CD14-positive monocyte (primary cell): ENCODE measurements at regions of chr1 and their contacts with region 1.

Region 1: GRCh38 chr1:229674042-229674441 is 48.0 kb downstream of the URB2 start:
- DNase-seq: no peak
- H3K4me3 ChIP-seq: no peak overlapping the region
- H3K4me3 Mint-ChIP-seq: no peak overlapping the region
- H3K27ac ChIP-seq: no peak overlapping the region
- H3K27ac Mint-ChIP-seq: no peak overlapping the region
- H3K4me1 ChIP-seq: no peaks in the 10 kb centered on the region
- H3K4me1 Mint-ChIP-seq: no peaks in the 10 kb centered on the region
- H3K27me3 ChIP-seq: no peaks in the 10 kb centered on the region
- H3K27me3 Mint-ChIP-seq: peaks cover 2% of the 10 kb centered on the region in 3 donors
- CTCF ChIP-seq: no peak

Region 2: GRCh38 chr1:228664399-228664914 is 1009.6 kb before region 1 on chr1:
- intact Hi-C with region 1: no loop called
- DNase-seq: peak; percentile 59 to 78 (median 69)
- H3K4me3 ChIP-seq: no peak overlapping the region
- H3K4me3 Mint-ChIP-seq: no peak overlapping the region
- H3K27ac ChIP-seq: no peak overlapping the region
- H3K27ac Mint-ChIP-seq: no peak overlapping the region
- H3K4me1 ChIP-seq: peaks cover 3 to 8% of the 10 kb centered on the region in 2 donors
- H3K4me1 Mint-ChIP-seq: peaks cover 8% of the 10 kb centered on the region
- H3K27me3 ChIP-seq: peaks cover 0 to 2% of the 10 kb centered on the region in 2 donors
- H3K27me3 Mint-ChIP-seq: peaks cover 9 to 15% (median 11%) of the 10 kb centered on the region in 3 donors
- CTCF ChIP-seq: peak; percentile 88

Region 3: GRCh38 chr1:229685149-229685548 is 11.1 kb after region 1 on chr1:
- intact Hi-C with region 1: loop called in 1 of 2 experiments (anchors 1 kb)
- DNase-seq: no peak
- H3K4me3 ChIP-seq: no peak overlapping the region
- H3K4me3 Mint-ChIP-seq: no peak overlapping the region
- H3K27ac ChIP-seq: no peak overlapping the region
- H3K27ac Mint-ChIP-seq: no peak overlapping the region
- H3K4me1 ChIP-seq: no peaks in the 10 kb centered on the region
- H3K4me1 Mint-ChIP-seq: no peaks in the 10 kb centered on the region
- H3K27me3 ChIP-seq: no peaks in the 10 kb centered on the region
- H3K27me3 Mint-ChIP-seq: peaks cover 3 to 4% (median 3%) of the 10 kb centered on the region in 3 donors
- CTCF ChIP-seq: no peak

Region 4: DNA sequence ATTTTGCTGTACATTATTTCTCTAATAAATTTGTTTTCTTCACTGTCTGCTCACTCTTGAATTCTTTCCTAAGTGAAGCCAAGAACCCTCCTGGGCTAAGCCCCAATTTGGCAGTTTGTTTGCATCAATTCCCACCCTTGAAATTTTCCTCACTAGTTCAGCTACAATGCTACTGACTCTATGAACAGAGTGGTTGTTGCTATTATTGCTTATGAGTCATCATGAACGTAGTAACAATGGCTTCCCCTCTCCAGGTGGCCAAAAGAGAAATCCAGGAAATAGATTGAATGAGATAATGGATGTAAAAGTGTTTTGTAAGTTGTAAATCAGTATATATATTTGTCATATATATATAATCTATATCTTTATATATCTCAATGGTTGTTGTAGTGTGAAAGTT is 145.0 kb after region 1 on chr1:
- intact Hi-C with region 1: no loop called
- DNase-seq: no peak
- H3K4me3 ChIP-seq: no peak overlapping the region
- H3K4me3 Mint-ChIP-seq: no peak overlapping the region
- H3K27ac ChIP-seq: no peak overlapping the region
- H3K27ac Mint-ChIP-seq: no peak overlapping the region
- H3K4me1 ChIP-seq: no peaks in the 10 kb centered on the region
- H3K4me1 Mint-ChIP-seq: no peaks in the 10 kb centered on the region
- H3K27me3 ChIP-seq: no peaks in the 10 kb centered on the region
- H3K27me3 Mint-ChIP-seq: peaks cover 2 to 5% (median 3%) of the 10 kb centered on the region in 3 donors
- CTCF ChIP-seq: no peak

Region 5: DNA sequence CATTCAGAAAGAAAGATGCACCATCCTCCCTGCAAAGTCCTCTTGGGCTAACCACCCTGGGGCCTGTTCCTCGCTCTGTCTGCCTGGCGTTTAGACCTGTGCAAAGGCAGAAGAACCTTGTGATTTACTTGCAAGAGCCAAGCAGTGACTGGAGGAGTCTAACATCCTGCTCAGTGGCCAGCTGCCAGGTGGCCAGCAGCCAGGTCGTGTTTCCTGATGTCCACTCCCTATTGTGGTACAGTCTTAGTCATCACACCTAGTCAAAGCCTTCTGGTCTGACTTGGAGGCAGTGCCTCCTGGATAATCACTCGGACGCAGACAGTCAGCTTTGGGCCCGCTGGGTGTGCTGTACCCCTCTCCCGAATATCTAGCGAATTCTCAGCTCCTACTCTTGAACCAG is 634.0 kb after region 1 on chr1:
- intact Hi-C with region 1: no loop called
- DNase-seq: no peak
- H3K4me3 ChIP-seq: no peak overlapping the region
- H3K4me3 Mint-ChIP-seq: no peak overlapping the region
- H3K27ac ChIP-seq: no peak overlapping the region
- H3K27ac Mint-ChIP-seq: no peak overlapping the region
- H3K4me1 ChIP-seq: peaks cover 0 to 5% of the 10 kb centered on the region in 2 donors
- H3K4me1 Mint-ChIP-seq: peaks cover 15% of the 10 kb centered on the region
- H3K27me3 ChIP-seq: no peaks in the 10 kb centered on the region
- H3K27me3 Mint-ChIP-seq: peaks cover 3 to 5% (median 4%) of the 10 kb centered on the region in 3 donors
- CTCF ChIP-seq: no peak